Left cardiac atrium (tissue), 4 donors: ENCODE measurements at regions of chr5 and their contacts with region 1.

Region 1: DNA sequence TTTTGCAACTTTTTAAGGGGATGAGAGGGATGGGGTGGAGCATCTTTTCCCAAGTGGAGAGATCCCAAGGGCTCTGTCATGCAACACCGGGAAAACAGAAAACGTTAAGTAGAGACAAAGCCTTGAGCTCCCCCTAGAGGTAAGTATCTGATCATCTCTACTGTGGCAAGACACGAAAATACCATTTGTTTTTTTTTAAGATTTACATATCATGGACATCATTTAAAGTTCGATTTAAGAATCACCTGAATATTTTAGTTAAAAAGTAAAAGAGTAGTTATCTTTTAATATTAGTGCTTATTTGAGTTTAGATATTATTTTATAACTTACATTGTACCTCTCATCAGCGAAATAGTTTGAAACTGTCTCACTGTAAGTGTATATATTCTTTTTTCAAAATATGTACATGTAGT is 200.4 kb downstream of the LRRC70 start:
- DNase-seq: no peak
- ATAC-seq: peak; percentile 87

Region 2: DNA sequence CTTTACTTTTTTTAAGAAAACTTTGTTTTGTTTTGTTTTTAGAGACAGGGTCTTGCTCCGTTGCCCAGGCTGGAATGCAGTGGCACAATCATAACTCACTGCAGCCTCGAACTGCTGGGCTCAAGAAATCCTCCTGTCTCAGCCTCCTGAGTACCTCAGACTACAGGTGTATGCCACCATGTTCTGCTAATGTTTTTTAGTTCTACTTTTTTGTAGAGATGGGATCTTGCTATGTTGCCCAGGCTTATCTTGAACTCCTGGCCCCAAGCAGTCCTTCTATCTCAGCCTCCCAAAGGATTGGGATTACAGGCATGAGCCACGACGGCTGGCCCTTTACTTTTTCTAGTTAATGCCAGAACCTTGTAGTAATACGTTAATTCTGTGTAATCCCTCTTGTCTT is 330.5 kb before region 1 on chr5:
- intact Hi-C with region 1: loop called (anchors 5 kb)
- DNase-seq: no peak
- ATAC-seq: no peak

Region 3: GRCh38 chr5:62460578-62460983 is 318.4 kb before region 1 on chr5:
- intact Hi-C with region 1: loop called (anchors 2 to 10 kb)
- DNase-seq: no peak
- ATAC-seq: peak; percentile 69 to 73

Region 4: DNA sequence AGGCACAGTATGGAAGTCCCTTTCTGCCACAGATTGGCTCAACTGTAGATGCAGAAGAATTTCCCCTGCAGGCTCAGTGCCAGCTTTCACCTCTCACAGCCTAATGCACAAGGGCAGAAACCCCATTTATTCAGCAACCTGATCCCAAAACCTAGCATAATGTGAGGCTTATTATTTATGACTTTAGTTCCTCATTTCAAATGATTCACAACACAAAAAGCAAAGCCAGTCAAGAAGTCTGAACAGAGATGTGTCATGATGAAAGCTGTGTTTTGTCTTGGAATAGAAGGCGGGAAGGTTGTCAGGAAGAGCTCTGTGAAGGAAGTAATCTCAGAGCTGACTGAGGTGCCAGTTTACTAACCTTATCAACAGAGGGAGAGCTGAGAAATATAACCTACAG is 169.3 kb after region 1 on chr5:
- intact Hi-C with region 1: no loop called
- DNase-seq: no peak
- ATAC-seq: no peak